Left ventricle myocardium superior (tissue), 1 donor: ENCODE measurements at regions of chr3 and their contacts with region 1.

Region 1: DNA sequence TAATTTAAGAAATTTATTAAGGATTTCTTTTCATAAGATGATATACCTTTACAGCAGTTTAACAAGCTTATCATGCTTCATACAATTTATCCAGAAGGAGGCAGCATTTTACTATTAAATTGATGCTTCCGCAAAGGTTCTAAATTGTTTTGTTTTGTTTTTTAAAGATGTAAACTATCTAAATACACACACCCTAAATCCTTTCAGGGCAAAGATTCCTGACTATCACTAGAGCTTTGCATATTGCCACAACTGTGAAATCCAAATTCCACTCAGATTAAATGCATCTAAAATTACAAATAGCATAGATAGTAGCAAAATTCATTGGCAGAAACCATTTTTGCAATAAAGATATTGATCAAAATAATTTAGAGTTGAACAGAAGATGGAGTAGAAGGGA is 44.5 kb upstream of the CCNL1 start:
- DNase-seq: no peak
- ATAC-seq: no peak

Region 2: DNA sequence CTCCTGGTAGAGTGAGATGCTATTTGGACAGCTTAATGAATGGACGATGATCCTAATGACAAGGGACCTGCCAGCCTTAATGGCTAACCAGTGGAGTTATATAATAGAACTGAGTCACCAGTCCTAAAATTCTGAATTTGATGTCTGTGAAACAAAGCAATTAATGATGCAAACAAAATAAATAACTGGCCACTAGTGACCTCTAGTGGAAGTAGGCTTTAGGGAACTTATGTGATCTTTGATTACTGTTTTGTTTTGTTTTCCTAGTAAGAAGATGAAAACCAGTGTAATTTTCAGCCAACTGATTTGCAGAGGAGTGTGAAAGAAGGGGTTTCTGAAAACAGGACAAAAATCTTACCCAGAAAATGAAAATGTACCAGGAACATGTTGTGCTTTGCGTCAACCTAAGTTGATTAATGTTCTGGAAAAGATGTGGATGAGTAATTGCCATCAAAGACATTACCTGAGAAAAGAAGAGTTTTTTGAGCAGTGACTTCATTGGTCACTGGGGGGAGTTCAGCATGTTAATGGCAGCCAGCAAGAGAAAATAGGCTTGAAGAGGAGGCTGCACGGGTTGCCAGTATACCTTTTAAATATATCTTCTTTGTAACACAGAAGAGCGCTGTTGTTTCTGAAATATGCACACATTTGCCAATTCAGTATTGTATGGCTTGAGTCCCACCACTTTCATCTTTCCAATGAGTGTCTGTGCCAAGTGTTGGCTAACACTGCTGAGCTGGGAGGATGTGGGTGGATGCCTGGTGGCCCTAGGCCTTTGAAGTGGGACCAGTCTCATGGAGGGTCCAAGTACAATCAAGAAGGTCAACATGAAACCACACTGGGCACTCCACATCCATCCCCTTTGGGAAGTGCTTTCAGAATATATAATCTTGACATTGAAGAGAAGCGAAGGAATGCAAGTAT is 289.5 kb after region 1 on chr3:
- intact Hi-C with region 1: loop called (anchors 2 kb)
- DNase-seq: no peak
- ATAC-seq: peak; percentile 19